Esophagus muscularis mucosa (tissue), 4 donors: ENCODE measurements at regions of chr18 and their contacts with region 1.

Region 1: DNA sequence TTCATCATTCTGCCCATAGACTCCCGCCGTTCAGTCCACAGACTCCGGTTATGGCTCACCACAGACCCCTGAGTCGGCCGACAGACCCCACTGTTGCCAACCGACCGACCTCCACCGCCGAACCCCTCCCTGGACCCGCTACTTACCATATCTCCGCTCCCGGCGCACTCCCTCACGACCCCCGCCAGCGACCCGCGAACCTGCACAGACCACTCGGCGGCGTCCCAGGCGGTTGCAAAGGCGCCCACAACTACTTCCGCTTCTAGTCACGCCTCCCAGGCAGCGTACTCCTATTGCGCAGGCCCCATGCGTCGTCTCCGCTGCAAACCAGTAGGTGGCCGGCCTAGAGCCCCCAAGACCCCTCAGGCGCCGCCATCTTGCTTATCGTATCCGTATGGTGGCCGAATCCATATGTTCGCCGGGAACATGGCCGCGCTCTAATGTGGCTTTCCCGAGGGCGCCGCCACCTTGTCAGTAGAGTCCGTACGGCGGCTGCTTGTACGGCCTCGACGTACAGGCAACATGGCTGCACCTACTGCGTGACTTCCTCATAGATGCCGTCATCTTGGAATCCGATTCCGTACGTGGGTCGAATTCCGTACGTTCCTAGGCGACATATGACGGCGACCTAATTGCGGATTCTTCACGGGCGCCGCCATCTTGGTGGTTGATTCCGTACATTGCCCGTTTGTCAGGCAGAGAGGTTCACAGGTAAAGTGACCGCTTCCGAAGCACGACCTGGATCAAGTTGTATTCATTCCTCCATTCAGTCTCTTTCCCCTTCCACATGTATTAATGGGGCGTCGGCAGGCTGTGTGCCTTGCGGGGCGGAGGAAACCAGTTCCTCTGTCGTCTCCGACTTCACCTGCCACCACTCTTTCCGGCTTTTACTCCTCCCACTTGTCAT is at the start of gene CXXC1:
- DNase-seq: peak; percentile 99
- H3K4me3 ChIP-seq: peak within 1 kb of the TSS; percentile 66 to 84 (median 76)
- H3K27ac ChIP-seq: peak within 1 kb of the TSS; percentile 82 to 88 (median 87)
- H3K4me1 ChIP-seq: peaks cover 5 to 18% (median 16%) of the 10 kb centered on the region in 4 donors
- H3K27me3 ChIP-seq: no peaks in the 10 kb centered on the region
- CTCF ChIP-seq: peak; percentile 33 to 58 (median 46)
- EP300 ChIP-seq: no peak
- POLR2A ChIP-seq: no peak
- total RNA-seq, gene CXXC1: 38.6 to 58.1 (median 49.2) TPM

Region 2: DNA sequence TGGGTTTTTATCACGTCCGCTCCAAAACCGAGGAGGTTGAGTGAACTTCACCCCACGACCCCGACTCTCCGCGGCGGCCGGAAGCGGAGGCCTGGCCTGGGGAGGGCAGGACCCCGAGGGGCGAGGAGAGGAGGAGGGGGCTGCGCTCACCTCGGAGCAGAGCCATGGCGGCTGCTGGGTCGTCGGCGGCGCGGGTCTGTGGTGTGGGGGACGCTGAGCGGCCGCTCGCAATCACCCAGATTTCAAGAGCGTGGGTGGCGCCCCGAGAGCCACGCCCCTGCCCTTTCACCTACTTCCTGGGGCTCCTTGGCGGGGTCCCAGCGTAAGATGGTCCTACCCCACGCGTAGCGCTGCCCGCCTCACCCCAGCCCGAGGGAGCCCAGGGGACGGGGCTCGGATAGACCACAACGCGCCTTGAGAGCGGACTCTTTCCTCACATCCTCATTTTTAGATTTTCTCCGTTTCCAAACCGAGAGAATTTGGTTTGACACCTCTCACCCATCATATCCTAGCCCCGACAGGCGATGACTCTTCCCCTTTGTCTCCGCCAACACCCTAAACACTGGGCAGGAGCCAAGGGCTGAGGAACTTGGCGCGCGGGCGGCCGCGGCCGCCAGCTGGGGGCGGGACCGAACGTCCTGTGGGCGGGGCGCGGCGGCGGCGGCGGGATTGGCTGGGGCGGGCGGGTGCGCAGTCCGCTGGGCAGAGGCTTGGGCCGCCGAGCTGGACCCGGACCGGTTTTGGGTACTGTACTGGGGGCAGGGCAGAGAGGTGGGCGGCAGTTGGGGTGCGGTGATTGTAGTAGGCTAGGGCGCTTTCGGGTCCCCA is 474.2 kb before region 1 on chr18 and contains the start of gene ACAA2:
- intact Hi-C with region 1: loop called (anchors 10 kb)
- DNase-seq: peak; percentile 95
- H3K4me3 ChIP-seq: peak within 1 kb of the TSS; percentile 74 to 89 (median 80)
- H3K27ac ChIP-seq: peak within 1 kb of the TSS; percentile 91 to 98 (median 96)
- H3K4me1 ChIP-seq: peaks cover 11 to 29% (median 26%) of the 10 kb centered on the region in 4 donors
- H3K27me3 ChIP-seq: no peaks in the 10 kb centered on the region
- CTCF ChIP-seq: no peak
- EP300 ChIP-seq: no peak
- POLR2A ChIP-seq: peak; percentile 84
- total RNA-seq, gene ACAA2: 46.9 to 101 (median 73.9) TPM

Region 3: GRCh38 chr18:51197661-51198424 is 910.1 kb after region 1 on chr18 and contains the start of gene MEX3C:
- intact Hi-C with region 1: loop called (anchors 10 kb)
- DNase-seq: peak; percentile 100
- H3K4me3 ChIP-seq: peak within 1 kb of the TSS; percentile 69 to 91 (median 78)
- H3K27ac ChIP-seq: peak within 1 kb of the TSS; percentile 97 to 99 (median 98)
- H3K4me1 ChIP-seq: peaks cover 21 to 37% (median 34%) of the 10 kb centered on the region in 4 donors
- H3K27me3 ChIP-seq: no peaks in the 10 kb centered on the region
- CTCF ChIP-seq: peak in 2 of 3 experiments; percentile 22 to 36
- EP300 ChIP-seq: no peak
- POLR2A ChIP-seq: no peak
- total RNA-seq, gene MEX3C: 22.8 to 38.0 (median 30.3) TPM